Astrocyte of the cerebellum (primary cell): ENCODE measurements at regions of chr7 and their contacts with region 1.

Region 1: DNA sequence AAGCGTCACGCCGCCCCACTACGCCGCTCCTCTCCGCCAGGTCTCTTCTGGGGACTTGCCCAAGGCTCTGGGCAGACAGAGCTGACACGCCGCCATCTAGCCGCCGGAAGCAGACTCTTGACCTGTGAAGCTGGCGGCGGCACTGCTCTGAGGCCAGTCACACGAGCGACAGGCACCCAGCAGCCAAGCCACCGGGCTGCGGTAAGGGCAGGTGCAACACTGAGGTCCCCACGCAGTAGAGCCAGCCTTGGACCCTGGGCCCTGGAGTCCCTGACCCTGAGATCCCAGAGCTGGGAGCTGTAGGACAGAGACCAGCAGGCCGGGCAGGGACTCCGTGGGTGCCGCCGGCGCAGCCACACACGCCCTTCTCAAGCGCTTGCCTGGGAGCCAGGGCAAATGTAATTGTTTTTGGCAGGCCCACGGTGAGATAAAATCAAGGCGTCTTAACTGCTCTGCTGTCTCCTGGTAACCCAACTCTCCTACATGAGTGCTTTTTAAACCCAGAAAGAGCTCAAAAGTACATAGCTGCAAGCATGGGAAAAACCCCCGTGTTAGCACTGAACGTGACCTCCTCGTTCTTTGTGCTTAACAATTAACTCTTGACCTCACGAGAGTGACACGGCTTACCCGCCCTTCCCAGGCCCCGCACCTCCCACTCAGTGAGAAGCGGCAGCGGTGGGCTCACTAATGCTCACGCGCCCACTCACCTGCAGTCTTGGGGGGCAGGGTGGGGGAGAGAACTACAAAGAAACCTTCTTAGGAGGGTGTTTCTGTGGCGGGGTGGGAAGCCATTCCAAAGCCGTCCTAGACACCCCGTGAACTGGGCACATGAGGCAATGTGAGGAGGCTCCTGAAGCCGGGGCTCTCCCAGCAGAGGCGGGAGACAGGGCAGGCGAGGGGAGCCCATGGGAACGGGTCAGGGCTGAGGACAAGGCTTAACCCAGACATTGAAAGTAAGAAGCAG is 8.5 kb downstream of the GPER1 start:
- DNase-seq: no peak
- H3K4me3 ChIP-seq: no peak overlapping the region
- CTCF ChIP-seq: no peak

Region 2: GRCh38 chr7:1044191-1045068 is 52.0 kb before region 1 on chr7 and contains the start of gene GPR146:
- in situ Hi-C with region 1: loop called (anchors 5 kb)
- DNase-seq: peak; percentile 89
- H3K4me3 ChIP-seq: peak within 1 kb of the TSS; percentile 53
- CTCF ChIP-seq: peak; percentile 74